Right ventricle myocardium superior (tissue), 1 donor: ENCODE measurements at regions of chr17 and their contacts with region 1.

Region 1: DNA sequence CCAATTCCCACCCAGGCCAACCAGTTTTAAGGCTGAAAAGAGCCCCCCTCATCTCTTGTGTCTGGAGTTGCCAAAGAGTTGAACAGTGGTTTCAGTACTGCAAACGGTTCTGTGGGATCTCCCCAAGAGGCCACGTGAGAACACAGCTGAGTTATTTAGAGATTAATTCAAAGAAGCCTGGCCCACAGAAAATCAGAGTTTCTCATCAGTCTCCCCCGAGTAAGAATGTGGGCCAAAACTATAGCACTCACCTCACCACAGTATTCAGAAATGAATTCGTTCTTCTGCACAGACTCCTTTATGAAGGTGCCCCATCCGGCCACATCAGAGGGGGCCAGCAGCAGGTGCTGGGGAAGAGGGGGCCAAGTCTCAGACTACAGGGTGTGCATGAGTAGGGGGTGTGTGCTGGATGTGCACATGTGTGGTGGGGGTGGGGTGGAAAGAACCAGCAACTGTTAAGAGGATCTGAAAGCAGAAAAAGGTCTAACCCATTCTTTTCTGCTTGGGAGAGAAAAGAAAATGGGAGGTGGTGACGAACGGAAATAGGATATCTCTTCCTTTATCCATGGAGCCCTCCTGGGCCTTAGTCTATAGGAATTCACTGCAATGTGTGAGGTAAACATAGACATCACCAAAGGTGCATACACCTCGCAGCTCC is 22.6 kb downstream of the CNTNAP1 start:
- DNase-seq: no peak
- ATAC-seq: no peak

Region 2: GRCh38 chr17:42819944-42820535 is 115.1 kb after region 1 on chr17:
- intact Hi-C with region 1: loop called (anchors 10 kb)
- DNase-seq: peak; percentile 70
- ATAC-seq: no peak

Region 3: GRCh38 chr17:42850954-42851353 is 146.0 kb after region 1 on chr17 and contains the start of gene AOC3:
- intact Hi-C with region 1: no loop called
- DNase-seq: peak; percentile 68
- ATAC-seq: peak; percentile 36
- total RNA-seq, gene AOC3: 8.3 TPM